ENCODE measurements at regions of chr14 and their contacts with region 1.

Region 1: GRCh38 chr14:103333754-103334643 is at the start of gene EIF5:
- DNase-seq: peak; percentile 98
- ATAC-seq: peak; percentile 84
- H3K4me3 Mint-ChIP-seq: peak within 1 kb of the TSS; percentile 91
- H3K27ac Mint-ChIP-seq: peak within 1 kb of the TSS; percentile 93
- H3K4me1 Mint-ChIP-seq: peaks cover 33% of the 10 kb centered on the region
- H3K27me3 Mint-ChIP-seq: no peaks in the 10 kb centered on the region
- CTCF ChIP-seq: no peak
- total RNA-seq, gene EIF5: 234 and 274 TPM in 2 replicates

Region 2: GRCh38 chr14:102362545-102363181 is 971.3 kb before region 1 on chr14 and contains the starts of genes CINP and TECPR2:
- CTCF ChIA-PET with region 1: no interaction called
- POLR2A ChIA-PET with region 1: interaction called, 10 read pairs
- intact Hi-C with region 1: no loop called
- DNase-seq: peak; percentile 92
- ATAC-seq: peak; percentile 82
- H3K4me3 Mint-ChIP-seq: no peak within 1 kb of the TSS
- H3K27ac Mint-ChIP-seq: peak within 1 kb of the TSS; percentile 97
- H3K4me1 Mint-ChIP-seq: peaks cover 35% of the 10 kb centered on the region
- H3K27me3 Mint-ChIP-seq: no peaks in the 10 kb centered on the region
- CTCF ChIP-seq: no peak
- total RNA-seq, gene CINP: 48.6 and 57.5 TPM in 2 replicates
- total RNA-seq, gene TECPR2: 9.9 and 11.8 TPM in 2 replicates

Region 3: GRCh38 chr14:103078093-103078749 is 255.8 kb before region 1 on chr14:
- CTCF ChIA-PET with region 1: no interaction called
- POLR2A ChIA-PET with region 1: no interaction called
- intact Hi-C with region 1: loop called (anchors 1 kb)
- DNase-seq: peak; percentile 46
- ATAC-seq: peak; percentile 66
- H3K4me3 Mint-ChIP-seq: no peak overlapping the region
- H3K27ac Mint-ChIP-seq: no peak overlapping the region
- H3K4me1 Mint-ChIP-seq: peaks cover 5% of the 10 kb centered on the region
- H3K27me3 Mint-ChIP-seq: no peaks in the 10 kb centered on the region
- CTCF ChIP-seq: no peak

Region 4: DNA sequence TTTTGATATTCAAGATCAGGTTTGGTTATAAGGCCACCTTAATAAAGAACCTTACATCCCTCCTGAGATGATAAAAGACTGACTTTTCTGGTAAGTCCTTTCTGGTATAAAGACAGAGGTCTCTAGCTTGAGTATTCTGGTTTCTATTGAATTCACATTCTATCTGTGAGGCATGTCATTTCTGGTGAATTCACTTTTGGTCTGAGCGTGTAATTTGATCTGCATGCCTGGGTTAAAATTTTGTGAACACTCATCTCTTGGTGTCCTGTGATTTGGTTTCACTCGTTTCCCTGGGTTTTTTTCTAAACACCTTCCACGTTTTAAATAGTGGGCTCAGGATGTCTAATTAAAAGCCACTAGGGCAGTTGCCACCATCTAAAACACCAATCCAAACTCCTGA is 12.3 kb after region 1 on chr14:
- CTCF ChIA-PET with region 1: no interaction called
- POLR2A ChIA-PET with region 1: interaction called, 27 read pairs
- intact Hi-C with region 1: no loop called
- DNase-seq: no peak
- ATAC-seq: no peak
- H3K4me3 Mint-ChIP-seq: no peak overlapping the region
- H3K27ac Mint-ChIP-seq: no peak overlapping the region
- H3K4me1 Mint-ChIP-seq: peaks cover 2% of the 10 kb centered on the region
- H3K27me3 Mint-ChIP-seq: no peaks in the 10 kb centered on the region
- CTCF ChIP-seq: no peak

Region 5: GRCh38 chr14:103483600-103483999 is 149.6 kb after region 1 on chr14:
- CTCF ChIA-PET with region 1: no interaction called
- POLR2A ChIA-PET with region 1: no interaction called
- intact Hi-C with region 1: loop called (anchors 2 kb)
- DNase-seq: no peak
- ATAC-seq: no peak
- H3K4me3 Mint-ChIP-seq: no peak overlapping the region
- H3K27ac Mint-ChIP-seq: no peak overlapping the region
- H3K4me1 Mint-ChIP-seq: peaks cover 18% of the 10 kb centered on the region
- H3K27me3 Mint-ChIP-seq: no peaks in the 10 kb centered on the region
- CTCF ChIP-seq: no peak

Region 6: GRCh38 chr14:103568952-103569351 is 235.0 kb after region 1 on chr14:
- CTCF ChIA-PET with region 1: no interaction called
- POLR2A ChIA-PET with region 1: no interaction called
- intact Hi-C with region 1: no loop called
- DNase-seq: no peak
- ATAC-seq: no peak
- H3K4me3 Mint-ChIP-seq: no peak overlapping the region
- H3K27ac Mint-ChIP-seq: no peak overlapping the region
- H3K4me1 Mint-ChIP-seq: peaks cover 18% of the 10 kb centered on the region
- H3K27me3 Mint-ChIP-seq: no peaks in the 10 kb centered on the region
- CTCF ChIP-seq: no peak

Region 7: GRCh38 chr14:103715052-103716000 is 381.3 kb after region 1 on chr14 and contains the starts of genes XRCC3 and ZFYVE21:
- CTCF ChIA-PET with region 1: no interaction called
- POLR2A ChIA-PET with region 1: no interaction called
- intact Hi-C with region 1: loop called (anchors 10 kb)
- DNase-seq: peak; percentile 97
- ATAC-seq: peak; percentile 95
- H3K4me3 Mint-ChIP-seq: peak within 1 kb of the TSS; percentile 89
- H3K27ac Mint-ChIP-seq: peak within 1 kb of the TSS; percentile 81
- H3K4me1 Mint-ChIP-seq: peaks cover 34% of the 10 kb centered on the region
- H3K27me3 Mint-ChIP-seq: no peaks in the 10 kb centered on the region
- CTCF ChIP-seq: no peak
- total RNA-seq, gene XRCC3: 23.5 and 26.0 TPM in 2 replicates
- total RNA-seq, gene ZFYVE21: 12.4 and 16.7 TPM in 2 replicates

Region 8: DNA sequence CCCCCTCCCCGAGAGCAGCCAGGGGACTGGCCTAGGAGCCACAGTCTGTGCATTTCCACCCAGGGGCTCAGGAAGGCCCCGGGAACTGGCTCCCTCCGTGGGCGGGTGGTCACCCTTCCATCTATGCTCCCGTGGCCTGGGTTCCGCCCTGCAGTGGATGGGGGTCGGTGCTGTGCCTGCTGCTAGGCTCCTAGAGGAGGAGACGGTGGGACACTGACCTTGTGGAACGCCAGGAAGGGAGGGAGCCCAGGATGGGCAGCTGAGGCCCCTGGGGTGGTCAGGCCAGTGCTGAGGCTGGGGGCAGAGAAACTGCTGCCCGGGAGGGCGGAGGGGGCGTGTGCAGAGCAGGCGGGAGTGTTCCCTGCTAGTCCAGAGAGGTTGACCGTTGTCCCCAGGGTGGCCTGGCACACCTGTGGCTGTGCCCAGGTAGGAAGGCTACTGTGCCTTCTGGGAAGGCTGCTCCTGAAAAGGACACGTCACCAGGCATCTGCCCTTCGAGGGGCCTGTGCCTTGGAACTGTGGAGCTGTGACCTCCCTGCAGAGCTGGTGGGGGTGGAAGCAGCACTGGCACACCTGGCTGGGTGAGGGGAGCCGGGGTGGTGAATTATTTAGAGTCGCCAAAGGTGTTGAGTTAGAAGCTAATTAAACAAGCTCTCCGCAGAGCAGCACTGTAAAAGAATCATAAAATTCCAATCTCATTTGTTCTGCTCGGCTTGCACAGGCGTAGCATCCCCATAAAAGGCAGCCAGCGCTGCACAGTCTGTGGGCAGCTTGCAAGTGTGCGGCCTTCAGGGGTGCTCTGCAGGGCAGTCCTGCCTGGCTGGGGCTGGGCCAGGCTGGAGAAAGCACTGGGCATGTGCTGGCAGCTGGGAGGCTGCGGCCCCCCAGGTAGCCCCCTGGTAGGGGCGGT is 949.5 kb after region 1 on chr14:
- CTCF ChIA-PET with region 1: no interaction called
- POLR2A ChIA-PET with region 1: no interaction called
- intact Hi-C with region 1: no loop called
- DNase-seq: no peak
- ATAC-seq: no peak
- H3K4me3 Mint-ChIP-seq: no peak overlapping the region
- H3K27ac Mint-ChIP-seq: no peak overlapping the region
- H3K4me1 Mint-ChIP-seq: no peaks in the 10 kb centered on the region
- H3K27me3 Mint-ChIP-seq: peaks cover 2% of the 10 kb centered on the region
- CTCF ChIP-seq: no peak

Region 9: DNA sequence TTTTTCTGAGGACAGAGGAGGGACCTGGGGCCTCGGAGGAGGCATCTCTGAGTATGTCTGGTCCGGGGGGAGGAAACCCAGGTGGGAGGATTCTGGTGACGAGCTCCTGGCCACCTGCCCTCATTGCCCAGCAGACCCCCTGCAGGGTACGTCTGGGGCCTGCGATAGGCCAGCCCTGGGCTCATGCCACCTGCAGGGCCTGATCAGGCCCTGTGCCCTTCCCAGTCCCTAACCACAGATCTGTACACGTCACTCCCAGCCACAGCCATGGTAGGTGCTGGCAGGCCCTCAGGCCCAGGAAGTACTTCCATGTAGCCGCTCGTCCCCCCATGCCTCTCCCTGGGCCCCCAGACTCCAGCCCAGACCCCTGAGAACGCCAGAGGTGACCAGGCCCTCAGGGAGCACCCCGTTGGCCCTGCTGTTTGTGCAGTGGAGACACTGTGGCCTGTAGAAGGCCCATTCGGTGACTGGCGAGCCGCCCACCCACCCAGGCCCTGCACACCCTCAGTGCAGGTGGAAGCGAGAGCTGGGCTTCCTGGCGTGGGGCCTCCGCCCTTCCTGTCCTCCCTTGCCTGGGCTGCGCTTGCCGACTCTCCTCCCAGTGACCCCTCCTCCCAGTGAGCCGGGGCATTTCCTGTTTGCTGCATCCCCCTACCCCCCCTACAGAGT is 1361.1 kb after region 1 on chr14:
- CTCF ChIA-PET with region 1: no interaction called
- POLR2A ChIA-PET with region 1: no interaction called
- intact Hi-C with region 1: no loop called
- DNase-seq: no peak
- ATAC-seq: peak; percentile 72
- H3K4me3 Mint-ChIP-seq: no peak overlapping the region
- H3K27ac Mint-ChIP-seq: peak overlapping the region; percentile 63
- H3K4me1 Mint-ChIP-seq: peaks cover 44% of the 10 kb centered on the region
- H3K27me3 Mint-ChIP-seq: no peaks in the 10 kb centered on the region
- CTCF ChIP-seq: no peak